Adrenal gland (tissue), 19 donors: ENCODE measurements at regions of chr10 and their contacts with region 1.

Region 1: GRCh38 chr10:122565728-122566206 is 5.2 kb downstream of the DMBT1 start:
- DNase-seq: peak; percentile 75 to 93 (median 77)
- H3K4me3 ChIP-seq: no peak overlapping the region
- H3K27ac ChIP-seq: no peak overlapping the region
- H3K4me1 ChIP-seq: no peaks in the 10 kb centered on the region
- H3K27me3 ChIP-seq: peaks cover 8% of the 10 kb centered on the region
- CTCF ChIP-seq: peak; percentile 74 to 89 (median 84)
- POLR2A ChIP-seq: no peak

Region 2: GRCh38 chr10:122298598-122299301 is 267.0 kb before region 1 on chr10:
- intact Hi-C with region 1: loop called (anchors 5 kb)
- DNase-seq: peak; percentile 65 to 88 (median 76)
- H3K4me3 ChIP-seq: no peak overlapping the region
- H3K27ac ChIP-seq: no peak overlapping the region
- H3K4me1 ChIP-seq: peaks cover 0 to 7% of the 10 kb centered on the region in 2 donors
- H3K27me3 ChIP-seq: peaks cover 7% of the 10 kb centered on the region
- CTCF ChIP-seq: peak; percentile 84 to 96 (median 92)
- POLR2A ChIP-seq: no peak

Region 3: DNA sequence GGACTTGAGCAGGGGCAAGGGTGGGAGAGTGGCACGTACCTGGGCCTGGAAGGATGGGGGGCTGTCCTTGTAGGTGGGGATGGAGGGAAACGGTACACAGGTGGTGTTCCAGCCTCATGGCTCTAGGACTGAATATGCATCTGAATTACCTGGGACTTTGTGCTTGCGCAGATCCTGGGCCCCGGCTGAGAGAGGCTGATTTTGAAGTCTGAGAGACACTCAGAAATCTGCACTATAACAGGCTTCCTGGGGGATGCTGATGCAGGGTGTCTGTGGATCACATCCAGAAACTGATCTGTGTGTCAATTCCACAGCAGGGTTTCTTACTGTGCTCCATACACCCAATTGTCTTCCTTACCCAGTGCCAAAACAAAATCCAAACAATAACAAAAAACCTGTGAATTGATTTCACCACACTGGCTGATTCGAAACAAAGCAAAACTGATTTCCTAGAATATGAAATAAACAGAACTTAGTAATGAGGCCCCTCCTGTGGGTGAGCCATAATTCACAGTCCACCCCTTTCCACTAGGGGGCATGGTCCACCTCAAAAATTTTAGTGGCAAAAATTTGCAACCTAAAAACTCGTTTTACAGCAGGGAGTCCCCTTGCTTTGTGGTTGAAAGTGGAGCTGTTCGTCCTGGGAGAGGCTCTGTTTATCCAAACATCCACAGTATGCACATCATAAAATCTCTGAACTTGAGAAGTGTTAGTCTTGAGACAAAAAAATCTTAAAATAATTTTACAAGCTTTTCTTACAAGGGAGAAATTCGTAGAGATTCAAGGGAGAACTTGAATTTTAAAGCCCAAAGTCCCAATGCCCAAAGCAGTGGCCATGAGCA is 223.3 kb before region 1 on chr10:
- intact Hi-C with region 1: loop called in 1 of 2 experiments (anchors 5 kb)
- DNase-seq: peak; percentile 30 to 64 (median 50)
- H3K4me3 ChIP-seq: no peak overlapping the region
- H3K27ac ChIP-seq: no peak overlapping the region
- H3K4me1 ChIP-seq: no peaks in the 10 kb centered on the region
- H3K27me3 ChIP-seq: no peaks in the 10 kb centered on the region
- CTCF ChIP-seq: peak; percentile 64 to 77 (median 77)
- POLR2A ChIP-seq: no peak

Region 4: GRCh38 chr10:122822973-122823690 is 257.4 kb after region 1 on chr10:
- intact Hi-C with region 1: no loop called
- DNase-seq: no peak
- H3K4me3 ChIP-seq: no peak overlapping the region
- H3K27ac ChIP-seq: no peak overlapping the region
- H3K4me1 ChIP-seq: no peaks in the 10 kb centered on the region
- H3K27me3 ChIP-seq: peaks cover 23% of the 10 kb centered on the region
- CTCF ChIP-seq: no peak
- POLR2A ChIP-seq: no peak